ENCODE measurements at regions of chr15 and their contacts with region 1.

Region 1: DNA sequence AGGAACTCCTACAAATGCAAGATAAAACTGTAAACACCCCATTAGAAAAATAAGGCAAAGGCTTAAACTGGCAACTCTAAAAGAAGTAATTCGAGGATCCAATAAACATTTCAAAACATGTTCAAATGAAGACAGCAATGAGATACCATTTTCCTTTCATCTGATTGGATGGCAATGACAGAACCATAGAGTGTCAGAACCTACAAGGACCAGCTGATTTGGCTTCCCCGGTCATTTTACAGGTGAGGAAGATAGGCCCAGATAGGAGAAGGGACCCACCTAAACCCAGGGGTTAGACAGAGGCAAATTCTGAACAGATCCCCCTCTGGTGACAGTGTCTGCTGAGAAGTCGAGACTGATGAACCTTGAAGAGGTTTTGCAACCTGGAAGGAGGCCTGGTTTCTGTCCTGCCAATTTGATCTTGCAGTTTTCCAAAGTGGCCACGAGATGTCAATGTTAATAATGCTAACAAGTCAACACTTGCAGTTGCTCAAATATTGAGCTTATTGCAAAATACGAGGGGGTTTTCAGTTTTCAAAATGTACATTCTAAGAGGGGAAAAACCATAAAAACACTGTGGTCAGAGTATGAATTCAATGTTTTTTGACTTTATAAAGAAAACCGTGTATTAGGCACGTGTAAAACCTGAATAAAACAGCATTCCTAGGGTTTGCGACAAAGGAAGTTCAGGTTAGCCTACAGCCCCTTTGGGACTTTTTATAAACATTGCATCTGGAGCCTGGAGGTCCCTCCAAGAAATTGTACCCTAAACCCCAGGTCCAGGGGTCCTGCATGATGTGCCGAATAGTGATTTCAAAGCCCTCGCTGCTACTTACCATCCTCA is 21.5 kb downstream of the CFAP161 start:
- DNase-seq: peak; percentile 33
- H3K4me3 Mint-ChIP-seq: no peak overlapping the region
- H3K27ac Mint-ChIP-seq: no peak overlapping the region
- H3K4me1 Mint-ChIP-seq: no peaks in the 10 kb centered on the region
- H3K27me3 Mint-ChIP-seq: peaks cover 56% of the 10 kb centered on the region
- CTCF ChIP-seq: peak; percentile 40

Region 2: GRCh38 chr15:80942746-80943555 is 212.6 kb before region 1 on chr15:
- CTCF ChIA-PET with region 1: no interaction called
- intact Hi-C with region 1: no loop called
- DNase-seq: no peak
- H3K4me3 Mint-ChIP-seq: no peak overlapping the region
- H3K27ac Mint-ChIP-seq: no peak overlapping the region
- H3K4me1 Mint-ChIP-seq: no peaks in the 10 kb centered on the region
- H3K27me3 Mint-ChIP-seq: no peaks in the 10 kb centered on the region
- CTCF ChIP-seq: no peak

Region 3: DNA sequence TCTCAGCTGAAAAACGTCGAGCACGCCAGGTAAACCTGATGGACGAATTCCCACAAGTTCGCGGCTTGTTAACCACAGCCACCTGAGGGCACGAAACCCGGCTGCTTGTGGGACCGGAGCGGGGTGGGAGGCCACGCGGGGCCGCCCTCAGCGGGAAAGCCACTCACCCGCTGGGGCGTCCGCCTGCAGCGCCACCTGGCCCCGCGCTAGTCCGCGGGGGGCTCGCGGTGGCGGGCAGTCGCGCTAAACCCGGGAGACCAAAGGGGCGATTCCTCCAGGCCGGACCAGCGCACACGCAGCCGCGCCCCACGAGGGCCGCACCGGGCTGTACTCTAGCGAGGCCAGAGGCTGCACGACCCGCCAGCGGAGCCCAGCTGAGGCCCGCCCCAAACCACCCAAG is 37.2 kb before region 1 on chr15:
- CTCF ChIA-PET with region 1: interaction called, 4 read pairs
- intact Hi-C with region 1: loop called (anchors 1 kb)
- DNase-seq: peak; percentile 13
- H3K4me3 Mint-ChIP-seq: peak overlapping the region; percentile 39
- H3K27ac Mint-ChIP-seq: no peak overlapping the region
- H3K4me1 Mint-ChIP-seq: peaks cover 13% of the 10 kb centered on the region
- H3K27me3 Mint-ChIP-seq: peaks cover 28% of the 10 kb centered on the region
- CTCF ChIP-seq: no peak

Region 4: GRCh38 chr15:81400640-81401236 is 245.1 kb after region 1 on chr15:
- CTCF ChIA-PET with region 1: no interaction called
- intact Hi-C with region 1: no loop called
- DNase-seq: peak; percentile 33
- H3K4me3 Mint-ChIP-seq: no peak overlapping the region
- H3K27ac Mint-ChIP-seq: no peak overlapping the region
- H3K4me1 Mint-ChIP-seq: no peaks in the 10 kb centered on the region
- H3K27me3 Mint-ChIP-seq: peaks cover 56% of the 10 kb centered on the region
- CTCF ChIP-seq: peak; percentile 39